ENCODE measurements at regions of chr14 and their contacts with region 1.

Region 1: GRCh38 chr14:70714055-70714621 is 72.4 kb downstream of the TTC9 start:
- DNase-seq: no peak
- H3K4me3 ChIP-seq: no peak overlapping the region
- CTCF ChIP-seq: peak; percentile 30

Region 2: DNA sequence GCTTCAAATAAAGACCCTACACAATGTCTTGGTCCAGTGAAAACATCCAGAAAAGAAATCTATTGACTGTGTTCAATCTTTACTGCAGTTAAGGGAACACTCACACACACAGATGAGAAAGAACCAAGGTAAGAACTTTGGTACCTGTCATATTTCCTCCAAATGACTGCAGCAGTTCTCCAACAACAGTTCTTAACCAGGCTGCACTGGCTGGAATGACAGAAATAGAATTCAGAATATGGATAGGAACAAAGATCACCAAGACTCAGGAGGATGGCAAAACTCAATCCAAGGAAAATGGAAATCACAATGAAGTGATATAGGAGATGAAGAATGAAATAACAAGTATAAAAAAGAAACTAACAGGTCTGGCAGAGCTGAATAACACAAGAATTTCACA is 215.9 kb before region 1 on chr14:
- CTCF ChIA-PET with region 1: no interaction called
- POLR2A ChIA-PET with region 1: no interaction called
- DNase-seq: no peak
- H3K4me3 ChIP-seq: no peak overlapping the region
- CTCF ChIP-seq: no peak

Region 3: GRCh38 chr14:70622111-70622712 is 91.9 kb before region 1 on chr14:
- CTCF ChIA-PET with region 1: interaction called, 22 read pairs
- POLR2A ChIA-PET with region 1: no interaction called
- DNase-seq: no peak
- H3K4me3 ChIP-seq: no peak overlapping the region
- CTCF ChIP-seq: peak; percentile 59

Region 4: GRCh38 chr14:70700952-70701585 is 13.1 kb before region 1 on chr14:
- CTCF ChIA-PET with region 1: interaction called, 12 read pairs
- POLR2A ChIA-PET with region 1: no interaction called
- DNase-seq: no peak
- H3K4me3 ChIP-seq: no peak overlapping the region
- CTCF ChIP-seq: no peak

Region 5: DNA sequence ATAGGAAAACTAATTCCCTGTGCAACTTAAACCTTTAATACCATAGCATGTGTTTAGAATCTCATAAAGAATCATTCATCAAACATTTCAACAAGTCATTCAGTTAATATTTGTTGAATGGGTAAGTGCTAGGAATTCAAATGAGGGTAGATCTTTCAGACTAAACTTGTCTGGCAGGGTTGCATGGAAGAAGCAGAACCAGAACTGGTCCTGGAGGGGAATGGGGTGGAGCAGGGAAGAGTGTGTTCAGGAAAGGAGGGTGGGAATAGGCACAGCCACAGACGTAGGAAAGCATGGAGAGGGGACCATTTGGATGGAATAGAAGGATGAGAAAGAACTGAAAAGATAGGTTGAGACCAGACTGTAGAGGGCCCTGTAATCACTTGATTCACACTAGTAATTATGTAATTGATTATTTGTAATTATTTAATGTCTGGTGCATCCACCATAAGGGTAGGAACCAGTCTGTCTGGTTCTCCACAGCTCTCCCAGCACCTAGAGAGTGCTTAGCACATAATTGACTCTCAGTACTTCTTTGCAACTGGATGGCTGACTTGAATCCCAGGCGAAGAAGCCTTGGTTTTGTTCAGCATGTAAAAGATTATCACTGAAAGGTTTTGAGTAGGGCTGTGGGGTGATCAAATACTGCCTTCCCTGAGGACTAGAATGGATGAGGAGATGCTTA is 98.1 kb after region 1 on chr14:
- CTCF ChIA-PET with region 1: no interaction called
- POLR2A ChIA-PET with region 1: no interaction called
- DNase-seq: no peak
- H3K4me3 ChIP-seq: no peak overlapping the region
- CTCF ChIP-seq: no peak